ENCODE measurements at regions of chr7 and their contacts with region 1.

Region 1: GRCh38 chr7:135886345-135887132 is 90.6 kb downstream of the MTPN start:
- DNase-seq: no peak
- H3K4me3 Mint-ChIP-seq: no peak overlapping the region
- H3K27ac Mint-ChIP-seq: peak overlapping the region; percentile 3
- H3K4me1 Mint-ChIP-seq: peaks cover 9% of the 10 kb centered on the region
- H3K27me3 Mint-ChIP-seq: no peaks in the 10 kb centered on the region

Region 2: GRCh38 chr7:135843214-135843613 is 43.3 kb before region 1 on chr7:
- CTCF ChIA-PET with region 1: no interaction called
- POLR2A ChIA-PET with region 1: no interaction called
- intact Hi-C with region 1: loop called (anchors 1 kb)
- DNase-seq: peak; percentile 17
- H3K4me3 Mint-ChIP-seq: no peak overlapping the region
- H3K27ac Mint-ChIP-seq: no peak overlapping the region
- H3K4me1 Mint-ChIP-seq: peaks cover 9% of the 10 kb centered on the region
- H3K27me3 Mint-ChIP-seq: peaks cover 3% of the 10 kb centered on the region

Region 3: DNA sequence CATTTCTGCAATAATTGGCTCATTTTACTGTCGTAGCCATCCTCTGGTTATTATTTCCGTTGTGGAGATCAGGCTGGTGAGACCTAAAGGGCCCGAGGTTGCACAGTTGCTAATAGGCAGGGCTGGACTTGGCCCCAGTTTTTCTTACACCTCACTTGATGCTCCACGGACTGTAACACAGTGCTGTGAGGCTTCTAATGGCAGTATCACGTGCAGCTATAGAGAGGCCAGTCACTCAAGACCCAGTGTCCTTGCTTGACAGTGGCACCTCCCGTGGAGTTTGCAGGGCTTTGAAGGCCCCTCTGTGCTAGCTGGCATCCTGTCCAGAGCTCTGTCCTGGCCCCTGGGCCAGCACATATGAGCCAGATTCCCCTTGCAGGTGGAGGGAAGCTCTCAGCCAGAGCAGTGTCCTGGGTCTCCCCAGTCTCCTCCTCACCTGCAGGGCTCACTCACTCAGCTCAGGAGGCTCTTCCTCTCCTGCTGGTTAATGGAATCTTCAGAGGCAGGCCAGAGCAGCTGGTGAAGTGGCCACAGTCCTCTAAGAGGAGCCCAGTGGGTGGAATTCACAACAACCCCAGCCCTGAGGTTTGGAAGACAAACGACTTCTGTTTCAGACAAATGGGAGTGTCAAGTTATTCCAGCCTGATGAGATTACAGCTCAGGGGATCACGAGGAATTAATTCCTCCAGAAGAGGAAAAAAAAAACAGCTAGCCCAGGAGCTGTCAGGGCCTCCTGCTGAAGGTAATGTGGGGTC is 23.8 kb before region 1 on chr7:
- CTCF ChIA-PET with region 1: no interaction called
- POLR2A ChIA-PET with region 1: no interaction called
- intact Hi-C with region 1: no loop called
- DNase-seq: no peak
- H3K4me3 Mint-ChIP-seq: no peak overlapping the region
- H3K27ac Mint-ChIP-seq: no peak overlapping the region
- H3K4me1 Mint-ChIP-seq: no peaks in the 10 kb centered on the region
- H3K27me3 Mint-ChIP-seq: no peaks in the 10 kb centered on the region

Region 4: GRCh38 chr7:135993950-135994349 is 107.4 kb after region 1 on chr7:
- CTCF ChIA-PET with region 1: no interaction called
- POLR2A ChIA-PET with region 1: no interaction called
- intact Hi-C with region 1: loop called (anchors 1 kb)
- DNase-seq: no peak
- H3K4me3 Mint-ChIP-seq: no peak overlapping the region
- H3K27ac Mint-ChIP-seq: peak overlapping the region; percentile 54
- H3K4me1 Mint-ChIP-seq: peaks cover 25% of the 10 kb centered on the region
- H3K27me3 Mint-ChIP-seq: no peaks in the 10 kb centered on the region

Measured in activated CD4-positive, alpha-beta memory T cell treated with anti-CD3 and anti-CD28 coated beads for 36 hours (primary cell).